ENCODE measurements at regions of chr5 and their contacts with region 1.

Region 1: DNA sequence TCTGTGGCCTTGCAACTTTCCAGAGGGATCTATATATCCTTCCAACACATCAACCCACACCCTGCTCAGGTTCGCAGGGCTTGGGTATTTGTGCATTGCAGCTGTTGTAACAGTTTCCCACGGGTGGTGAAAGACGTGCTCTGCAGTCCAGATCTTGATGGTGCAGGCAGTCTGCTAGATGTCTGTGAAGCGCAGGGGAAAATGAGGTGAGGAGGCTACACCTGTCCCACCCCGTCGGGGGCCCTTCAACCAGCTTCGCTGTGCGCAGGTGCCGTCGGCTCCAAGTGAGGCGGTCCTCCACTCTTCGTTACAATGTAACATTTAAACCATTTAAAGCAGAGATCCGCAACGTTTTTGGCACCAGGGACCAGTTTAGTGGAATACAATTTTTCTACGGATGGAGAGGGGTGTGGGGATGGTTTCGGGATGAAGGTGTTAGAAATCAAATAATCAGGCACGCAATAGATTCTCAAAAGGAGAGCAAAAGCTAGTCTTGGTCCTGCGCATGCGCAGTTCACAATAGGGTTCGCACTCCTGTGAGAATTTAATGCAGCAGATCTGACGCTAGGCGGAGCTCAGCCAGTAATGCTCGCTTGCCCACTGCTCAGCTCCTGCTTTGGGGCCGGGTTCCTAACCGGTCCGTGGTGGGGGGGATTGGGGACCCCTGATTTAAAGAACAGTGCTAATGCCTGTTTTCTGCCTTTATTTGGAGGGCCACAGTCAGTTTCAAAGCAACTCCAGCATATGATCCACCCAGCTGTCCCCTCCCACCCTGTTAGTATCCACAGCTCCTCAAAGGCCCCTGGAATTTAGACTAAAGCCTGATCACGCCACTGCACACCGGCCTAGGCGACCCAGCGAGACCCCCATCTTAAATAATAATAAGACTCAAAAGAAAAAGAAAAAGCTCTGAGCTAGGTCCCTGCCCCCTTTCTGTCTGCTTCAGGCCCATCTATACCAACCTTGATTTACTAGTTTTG is 97.1 kb upstream of the SELENOP start:
- DNase-seq: peak; percentile 96
- ATAC-seq: peak; percentile 83
- H3K4me3 ChIP-seq: peak overlapping the region; percentile 67
- H3K27ac ChIP-seq: no peak overlapping the region
- H3K4me1 ChIP-seq: peaks cover 5% of the 10 kb centered on the region; the same call in 1 of the 2 replicates
- H3K27me3 ChIP-seq: no peaks in the 10 kb centered on the region
- CTCF ChIP-seq: peak; percentile 77

Region 2: GRCh38 chr5:42701351-42702059 is 207.3 kb before region 1 on chr5:
- CTCF ChIA-PET with region 1: no interaction called
- POLR2A ChIA-PET with region 1: no interaction called
- intact Hi-C with region 1: no loop called
- DNase-seq: no peak
- ATAC-seq: no peak
- H3K4me3 ChIP-seq: no peak overlapping the region
- H3K27ac ChIP-seq: no peak overlapping the region
- H3K4me1 ChIP-seq: no peaks in the 10 kb centered on the region
- H3K27me3 ChIP-seq: no peaks in the 10 kb centered on the region
- CTCF ChIP-seq: no peak

Region 3: DNA sequence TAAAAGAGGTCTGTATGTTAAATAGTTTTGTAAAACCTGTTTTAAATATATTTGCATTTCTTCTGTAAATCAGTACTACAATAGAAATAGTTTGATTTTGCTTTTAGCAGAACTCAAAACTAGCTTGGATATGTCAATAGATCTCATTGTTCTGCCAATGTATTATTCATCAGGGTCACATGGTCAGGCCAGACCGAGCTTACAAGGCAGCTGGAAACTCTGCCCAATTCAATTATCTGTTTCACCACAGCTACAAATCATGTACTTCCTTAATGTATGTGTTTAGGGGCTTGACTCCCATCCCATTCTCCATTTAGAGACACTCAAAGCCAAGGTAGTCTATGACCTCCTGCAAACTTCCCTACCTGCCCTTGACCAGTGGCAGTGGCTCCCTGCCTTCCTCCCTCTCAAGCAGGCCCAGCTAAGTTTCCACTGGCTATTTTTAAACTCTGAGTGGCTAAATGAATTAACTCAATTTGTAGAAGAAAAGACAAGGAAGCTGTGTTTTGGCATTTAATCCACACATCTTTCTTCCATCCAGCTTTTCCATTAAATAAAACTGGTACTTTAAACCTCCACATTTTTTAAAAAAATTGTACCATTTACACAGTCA is 50.7 kb before region 1 on chr5:
- CTCF ChIA-PET with region 1: no interaction called
- POLR2A ChIA-PET with region 1: no interaction called
- intact Hi-C with region 1: no loop called
- DNase-seq: peak; percentile 51
- ATAC-seq: peak; percentile 80
- H3K4me3 ChIP-seq: no peak overlapping the region
- H3K27ac ChIP-seq: no peak overlapping the region
- H3K4me1 ChIP-seq: peaks cover 3% of the 10 kb centered on the region; the same call in 1 of the 2 replicates
- H3K27me3 ChIP-seq: no peaks in the 10 kb centered on the region
- CTCF ChIP-seq: no peak

Region 4: DNA sequence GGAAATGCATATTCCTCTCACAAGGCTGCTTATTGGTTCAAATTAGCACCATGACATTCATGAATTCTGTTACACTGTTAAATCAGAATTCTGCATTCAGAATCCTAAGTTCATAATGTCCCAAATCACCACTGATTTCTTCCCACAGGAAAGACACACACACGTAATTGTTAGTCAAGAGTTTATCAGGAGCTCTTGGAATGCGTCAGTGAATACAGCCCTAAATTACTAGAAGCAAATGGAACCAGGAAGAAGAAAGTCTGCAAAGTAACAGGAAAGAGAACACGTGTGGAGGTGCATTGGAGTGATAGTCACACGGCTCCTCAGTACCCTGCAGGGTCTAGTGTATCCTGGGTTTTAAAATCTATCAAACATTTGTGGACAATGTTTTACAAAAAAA is 21.1 kb after region 1 on chr5:
- CTCF ChIA-PET with region 1: interaction called, 11 read pairs
- POLR2A ChIA-PET with region 1: no interaction called
- intact Hi-C with region 1: no loop called
- DNase-seq: peak; percentile 39
- ATAC-seq: peak; percentile 38
- H3K4me3 ChIP-seq: no peak overlapping the region
- H3K27ac ChIP-seq: no peak overlapping the region
- H3K4me1 ChIP-seq: 0 out of 2 replicates have a peak, but pooled peaks cover 7% of the 10 kb centered on the region
- H3K27me3 ChIP-seq: no peaks in the 10 kb centered on the region
- CTCF ChIP-seq: no peak

Region 5: GRCh38 chr5:42950440-42951292 is 41.9 kb after region 1 on chr5:
- CTCF ChIA-PET with region 1: interaction called, 15 read pairs
- POLR2A ChIA-PET with region 1: no interaction called
- intact Hi-C with region 1: loop called (anchors 1 kb)
- DNase-seq: peak; percentile 100
- ATAC-seq: peak; percentile 81
- H3K4me3 ChIP-seq: peak overlapping the region; percentile 64
- H3K27ac ChIP-seq: peak overlapping the region; percentile 94
- H3K4me1 ChIP-seq: peaks cover 30% of the 10 kb centered on the region
- H3K27me3 ChIP-seq: no peaks in the 10 kb centered on the region
- CTCF ChIP-seq: no peak

Region 6: GRCh38 chr5:43008369-43009153 is 99.8 kb after region 1 on chr5:
- CTCF ChIA-PET with region 1: interaction called, 6 read pairs
- POLR2A ChIA-PET with region 1: interaction called, 4 read pairs
- intact Hi-C with region 1: loop called (anchors 1 kb)
- DNase-seq: peak; percentile 98
- ATAC-seq: peak; percentile 64
- H3K4me3 ChIP-seq: peak overlapping the region; percentile 66
- H3K27ac ChIP-seq: peak overlapping the region; percentile 71
- H3K4me1 ChIP-seq: peaks cover 14% of the 10 kb centered on the region; the same call in 1 of the 2 replicates
- H3K27me3 ChIP-seq: no peaks in the 10 kb centered on the region
- CTCF ChIP-seq: peak; percentile 48; the same call in 1 of the 2 replicates

Region 7: GRCh38 chr5:43040287-43041098 is 131.7 kb after region 1 on chr5 and contains the start of gene ANXA2R:
- CTCF ChIA-PET with region 1: interaction called, 11 read pairs
- POLR2A ChIA-PET with region 1: interaction called, 7 read pairs
- intact Hi-C with region 1: loop called (anchors 1 kb)
- DNase-seq: peak; percentile 100
- ATAC-seq: peak; percentile 36
- H3K4me3 ChIP-seq: peak within 1 kb of the TSS; percentile 70
- H3K27ac ChIP-seq: peak within 1 kb of the TSS; percentile 90
- H3K4me1 ChIP-seq: peaks cover 20% of the 10 kb centered on the region
- H3K27me3 ChIP-seq: no peaks in the 10 kb centered on the region
- CTCF ChIP-seq: peak; percentile 89
- total RNA-seq, gene ANXA2R: 4.8 and 8.9 TPM in 2 replicates

Region 8: DNA sequence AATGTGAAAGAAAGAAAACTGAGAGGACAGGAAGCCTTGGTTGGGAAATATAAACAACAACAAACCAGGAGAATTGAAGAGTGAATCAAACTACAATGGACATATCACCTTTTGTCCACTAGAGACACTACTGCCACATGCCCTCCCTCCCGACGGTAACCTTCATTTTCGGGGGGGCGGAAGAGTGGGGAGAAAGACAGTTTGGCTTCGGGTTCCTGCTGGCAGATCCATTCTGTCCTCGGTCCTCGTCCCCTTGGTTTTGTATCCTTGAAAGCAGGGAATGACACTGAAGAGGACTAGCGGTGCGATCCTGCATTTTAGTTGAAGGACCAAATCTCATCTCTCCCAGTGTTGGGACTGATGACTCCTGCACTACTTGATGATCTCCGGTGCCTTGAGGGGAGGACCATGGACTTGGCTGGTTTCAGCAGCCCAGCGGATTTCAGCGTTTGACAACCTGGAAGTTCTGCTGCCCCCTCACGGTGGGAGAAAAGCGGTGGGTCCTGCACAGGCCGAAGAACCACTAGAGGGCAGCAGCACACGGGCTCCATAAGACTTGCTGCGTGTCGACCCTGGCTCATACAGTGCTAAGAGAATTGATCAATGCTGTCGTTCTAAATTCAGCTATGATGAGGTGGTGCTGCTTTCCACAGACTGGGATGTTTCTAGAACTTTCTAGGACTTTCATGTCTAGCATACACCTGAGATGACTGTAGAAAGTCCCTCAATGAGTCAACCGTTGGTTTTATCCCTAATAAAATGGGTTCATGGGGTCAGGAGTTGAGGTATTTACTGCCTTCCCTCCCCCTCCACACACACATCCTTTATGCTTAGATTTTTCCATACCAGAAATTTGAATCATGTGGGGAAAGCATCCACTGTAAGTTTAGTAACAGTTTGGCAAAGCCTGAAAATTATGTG is 196.8 kb after region 1 on chr5:
- CTCF ChIA-PET with region 1: interaction called, 3 read pairs
- POLR2A ChIA-PET with region 1: no interaction called
- intact Hi-C with region 1: loop called (anchors 1 kb)
- DNase-seq: peak; percentile 98
- ATAC-seq: peak; percentile 93
- H3K4me3 ChIP-seq: peak overlapping the region; percentile 67
- H3K27ac ChIP-seq: peak overlapping the region; percentile 31
- H3K4me1 ChIP-seq: peaks cover 12% of the 10 kb centered on the region
- H3K27me3 ChIP-seq: no peaks in the 10 kb centered on the region
- CTCF ChIP-seq: peak; percentile 100

Measured in PC-3 (cell line).